ENCODE measurements at regions of chr17 and their contacts with region 1.

Region 1: DNA sequence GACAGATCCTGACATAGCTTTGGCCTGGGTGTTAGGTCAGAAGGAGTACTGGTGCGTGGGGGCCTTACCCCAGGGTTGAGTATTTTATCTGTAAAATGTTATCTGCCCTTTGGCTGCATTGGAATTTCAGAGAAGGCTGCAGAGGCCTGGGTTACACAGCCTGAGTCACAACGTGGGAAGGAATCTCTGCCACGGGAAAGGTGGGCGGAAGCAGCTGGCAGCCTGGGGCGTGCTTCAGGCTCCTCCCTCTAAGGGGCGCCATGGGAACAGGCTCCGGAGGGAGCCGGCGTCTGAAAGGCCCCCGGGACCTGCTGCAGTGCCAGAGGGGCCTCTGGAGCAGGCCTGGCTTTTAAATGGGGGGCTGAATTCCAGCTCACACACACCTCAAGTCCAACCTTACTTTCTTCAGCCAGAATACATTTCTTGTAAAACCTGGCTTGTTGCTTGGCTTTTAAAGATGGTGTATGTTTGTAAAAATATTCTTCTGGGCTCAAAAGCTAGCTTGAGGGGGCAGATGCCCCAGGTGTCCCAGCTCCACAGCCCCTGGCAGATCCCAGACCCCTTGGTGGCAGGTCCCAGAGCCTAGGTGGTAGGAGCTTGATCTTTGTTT is 142.2 kb downstream of the RAB11FIP4 start:
- DNase-seq: peak; percentile 41
- H3K4me3 ChIP-seq: no peak overlapping the region
- H3K27ac ChIP-seq: no peak overlapping the region
- H3K4me1 ChIP-seq: peaks cover 54% of the 10 kb centered on the region
- CTCF ChIP-seq: peak; percentile 79

Region 2: GRCh38 chr17:31321481-31321880 is 212.2 kb before region 1 on chr17 and contains the start of gene EVI2A:
- CTCF ChIA-PET with region 1: no interaction called
- POLR2A ChIA-PET with region 1: interaction called, 3 read pairs
- intact Hi-C with region 1: loop called (anchors 5 kb)
- DNase-seq: peak; percentile 89
- H3K4me3 ChIP-seq: peak within 1 kb of the TSS; percentile 77
- H3K27ac ChIP-seq: peak within 1 kb of the TSS; percentile 97
- H3K4me1 ChIP-seq: peaks cover 25% of the 10 kb centered on the region
- CTCF ChIP-seq: no peak
- total RNA-seq, gene EVI2A: 11.6 and 14.1 TPM in 2 replicates

Region 3: DNA sequence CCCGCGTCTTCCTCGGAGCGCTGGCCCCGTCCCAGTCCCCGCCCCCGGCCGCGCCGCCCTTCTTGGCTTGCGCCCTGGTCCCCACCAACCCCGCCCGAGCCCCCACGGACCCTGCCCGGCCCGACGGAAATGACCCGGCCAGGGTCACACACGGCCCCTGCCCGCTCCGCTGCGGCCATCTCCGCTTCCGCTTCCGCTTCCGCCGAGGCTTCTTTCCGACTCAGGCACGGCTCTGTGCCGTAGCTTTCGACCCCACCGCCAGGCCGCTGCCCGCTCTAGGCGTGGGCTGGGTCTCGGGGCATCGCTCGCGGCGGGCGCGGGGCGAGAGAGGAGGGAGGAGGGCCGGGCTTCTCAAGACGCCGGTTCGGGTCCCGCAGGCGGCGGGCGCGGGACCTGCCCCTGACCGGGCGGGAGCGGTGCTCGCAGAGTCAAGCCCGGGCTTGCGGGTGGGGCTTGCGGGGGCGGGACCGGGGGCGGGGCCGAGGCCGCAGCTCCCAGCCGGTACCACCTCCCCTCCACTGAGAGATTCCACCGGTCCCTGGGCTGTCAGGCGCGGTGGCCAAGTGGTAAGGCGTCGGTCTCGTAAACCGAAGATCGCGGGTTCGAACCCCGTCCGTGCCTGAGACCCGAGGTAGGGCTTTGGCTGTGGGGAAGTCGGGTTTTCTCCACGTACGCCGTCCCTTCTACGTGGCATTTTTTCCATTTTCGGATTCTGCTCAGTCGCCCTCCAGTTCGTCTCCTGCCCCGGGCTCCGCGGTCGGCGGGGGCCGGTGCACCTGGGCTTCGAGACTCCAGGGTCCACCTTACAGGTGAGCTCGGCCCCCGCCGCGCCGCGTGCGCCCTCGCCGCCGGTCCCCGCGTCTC is 16.1 kb after region 1 on chr17:
- CTCF ChIA-PET with region 1: interaction called, 3 read pairs
- POLR2A ChIA-PET with region 1: interaction called, 10 read pairs
- intact Hi-C with region 1: loop called (anchors 1 kb)
- DNase-seq: peak; percentile 87
- H3K4me3 ChIP-seq: peak overlapping the region; percentile 97
- H3K27ac ChIP-seq: peak overlapping the region; percentile 68
- H3K4me1 ChIP-seq: peaks cover 20% of the 10 kb centered on the region
- CTCF ChIP-seq: no peak

Region 4: DNA sequence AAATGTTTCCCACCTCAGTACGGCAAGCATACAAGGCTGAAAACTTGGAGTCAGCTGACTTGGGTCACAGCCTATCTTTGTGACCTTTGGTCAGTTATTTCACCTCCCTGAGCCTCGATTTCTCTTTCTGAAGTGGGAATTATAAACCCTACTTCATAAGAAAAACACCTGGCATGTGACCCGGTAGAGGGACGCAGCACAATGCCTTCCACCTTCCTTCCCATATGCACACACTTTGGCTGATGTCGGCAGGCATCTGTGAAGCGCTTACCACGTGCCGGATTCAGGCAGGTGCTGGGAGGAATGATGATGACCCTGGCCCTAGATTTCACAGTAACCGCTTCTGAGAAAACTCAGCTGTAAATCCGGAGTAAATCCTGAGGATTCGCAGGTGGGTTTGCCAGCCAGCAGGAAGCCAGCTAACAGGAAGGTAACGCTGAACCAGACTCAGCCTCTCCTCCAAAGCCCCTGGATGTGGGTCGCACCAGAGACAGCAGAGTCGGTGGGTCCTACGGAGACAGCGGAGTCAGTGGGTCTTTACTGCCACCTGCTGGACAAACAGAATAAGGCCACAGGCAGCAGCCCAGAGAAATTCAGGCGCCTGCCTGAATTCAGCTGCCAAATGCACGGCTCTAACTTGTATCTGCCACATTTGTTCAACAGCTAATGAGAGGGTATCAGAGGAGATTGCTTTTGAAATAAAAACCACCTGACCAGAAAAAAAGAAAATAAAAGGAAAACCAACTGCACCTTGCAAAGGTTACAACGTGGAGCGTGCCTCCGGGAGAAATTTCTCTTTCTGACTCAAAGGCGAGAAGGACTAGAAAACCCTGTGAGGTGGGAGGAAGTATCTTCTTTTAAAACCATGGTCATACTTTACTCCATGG is 308.8 kb after region 1 on chr17:
- CTCF ChIA-PET with region 1: interaction called, 5 read pairs
- POLR2A ChIA-PET with region 1: interaction called, 5 read pairs
- intact Hi-C with region 1: loop called (anchors 1 kb)
- DNase-seq: peak; percentile 80
- H3K4me3 ChIP-seq: no peak overlapping the region
- H3K27ac ChIP-seq: no peak overlapping the region
- H3K4me1 ChIP-seq: peaks cover 8% of the 10 kb centered on the region
- CTCF ChIP-seq: peak; percentile 99

Region 5: GRCh38 chr17:31907342-31907962 is 373.8 kb after region 1 on chr17:
- CTCF ChIA-PET with region 1: no interaction called
- POLR2A ChIA-PET with region 1: no interaction called
- intact Hi-C with region 1: loop called (anchors 10 kb)
- DNase-seq: no peak
- H3K4me3 ChIP-seq: no peak overlapping the region
- H3K27ac ChIP-seq: no peak overlapping the region
- H3K4me1 ChIP-seq: peaks cover 14% of the 10 kb centered on the region
- CTCF ChIP-seq: no peak